PC-3 (cell line): ENCODE measurements at regions of chr6 and their contacts with region 1.

Region 1: DNA sequence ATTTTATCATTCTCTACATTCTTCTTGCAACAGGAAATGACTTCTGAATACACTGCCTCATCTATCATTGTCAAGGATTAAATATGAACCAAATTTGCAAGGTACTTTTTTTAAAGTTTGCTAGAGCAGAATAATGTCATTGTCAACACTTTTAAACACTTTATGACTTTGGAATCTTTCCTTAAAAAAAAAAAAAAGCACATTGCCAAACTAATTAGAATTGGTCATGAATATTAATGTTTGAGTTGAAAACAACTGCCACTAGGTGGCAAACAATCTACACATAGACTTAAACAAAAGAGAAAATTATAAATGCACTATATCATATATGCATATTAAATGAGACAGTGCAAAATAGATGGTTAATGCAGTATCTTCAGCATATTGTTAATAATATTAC is 32.5 kb upstream of the TMEM244 start:
- DNase-seq: peak; percentile 14
- ATAC-seq: no peak
- H3K4me3 ChIP-seq: no peak overlapping the region
- H3K27ac ChIP-seq: no peak overlapping the region
- H3K4me1 ChIP-seq: peaks cover 28% of the 10 kb centered on the region
- H3K27me3 ChIP-seq: no peaks in the 10 kb centered on the region
- CTCF ChIP-seq: peak; percentile 70

Region 2: DNA sequence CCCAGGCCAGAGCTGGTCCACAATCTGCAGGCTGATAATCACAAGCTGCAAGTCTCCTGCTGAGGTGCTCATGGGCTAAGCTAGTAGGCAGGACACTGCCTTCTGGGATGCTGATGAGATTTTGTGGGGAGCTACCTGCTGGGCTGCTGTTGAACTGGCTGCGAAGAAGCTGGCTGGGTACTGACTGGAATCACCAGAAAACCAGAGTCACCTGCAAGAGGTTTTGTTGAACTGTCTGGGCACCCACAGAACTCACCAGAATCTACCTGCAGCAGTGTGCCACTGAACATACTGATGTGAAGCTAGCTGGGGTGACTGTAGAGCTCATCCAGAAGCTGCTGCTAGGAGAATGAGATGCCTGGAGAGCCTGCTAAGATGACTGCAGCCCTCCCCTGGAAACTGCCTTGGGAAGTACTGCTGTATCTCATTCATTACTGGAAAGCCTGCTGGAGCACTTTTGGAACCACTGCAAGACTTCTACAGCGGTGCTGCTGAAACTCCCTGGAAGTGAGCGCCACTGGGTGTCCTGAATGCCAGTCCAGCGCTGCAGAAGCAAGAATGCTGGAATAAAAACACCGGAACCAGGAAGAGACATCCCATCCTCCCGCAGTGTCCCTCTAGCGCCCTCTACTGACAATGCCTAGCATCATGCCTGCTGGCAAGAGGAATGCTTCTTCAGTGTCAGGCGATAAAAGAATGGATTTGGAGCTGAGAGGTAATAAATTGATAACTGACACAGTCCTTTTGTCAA is 118.8 kb before region 1 on chr6:
- CTCF ChIA-PET with region 1: no interaction called
- POLR2A ChIA-PET with region 1: no interaction called
- intact Hi-C with region 1: loop called (anchors 10 kb)
- DNase-seq: peak; percentile 81
- ATAC-seq: peak; percentile 67
- H3K4me3 ChIP-seq: peak overlapping the region; percentile 23; the same call in 1 of the 2 replicates
- H3K27ac ChIP-seq: no peak overlapping the region
- H3K4me1 ChIP-seq: no peaks in the 10 kb centered on the region
- H3K27me3 ChIP-seq: no peaks in the 10 kb centered on the region
- CTCF ChIP-seq: peak; percentile 90

Region 3: DNA sequence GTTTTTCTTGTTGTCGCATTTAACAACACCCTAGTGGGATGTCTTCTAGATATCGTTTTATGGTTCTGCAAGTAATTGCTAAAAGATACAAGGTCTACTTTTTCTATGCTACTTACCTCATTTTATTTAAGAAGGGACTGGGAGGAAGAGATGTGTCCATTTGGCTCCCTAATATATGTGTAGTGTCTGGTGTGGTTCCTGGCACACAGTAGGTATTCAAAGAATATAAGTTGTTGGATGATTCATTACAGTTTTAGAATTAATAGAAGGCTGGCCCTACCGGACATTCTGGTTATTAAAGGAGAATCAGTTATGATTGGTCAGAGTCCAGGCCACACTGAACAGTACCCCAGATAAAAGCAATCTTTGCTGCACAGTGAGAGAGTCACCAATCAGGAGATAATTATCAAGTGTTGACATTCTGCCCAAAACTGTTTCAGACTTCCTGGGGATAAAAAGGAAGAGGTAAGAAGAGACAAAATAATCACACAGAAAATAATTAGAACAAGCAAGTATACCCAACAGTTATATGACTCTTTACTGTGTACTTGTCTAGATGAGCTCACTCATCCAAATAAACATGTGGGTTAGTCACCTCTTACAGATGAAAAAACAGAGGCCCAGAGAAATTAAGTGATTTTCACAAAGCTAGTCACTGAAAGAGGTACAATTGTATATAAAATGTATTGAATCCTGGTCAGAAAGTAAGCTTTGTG is 39.5 kb before region 1 on chr6:
- CTCF ChIA-PET with region 1: no interaction called
- POLR2A ChIA-PET with region 1: no interaction called
- intact Hi-C with region 1: loop called (anchors 2 kb)
- DNase-seq: peak; percentile 64
- ATAC-seq: peak; percentile 86
- H3K4me3 ChIP-seq: no peak overlapping the region
- H3K27ac ChIP-seq: peak overlapping the region; percentile 51
- H3K4me1 ChIP-seq: peaks cover 37% of the 10 kb centered on the region
- H3K27me3 ChIP-seq: no peaks in the 10 kb centered on the region
- CTCF ChIP-seq: no peak

Region 4: GRCh38 chr6:129923530-129924250 is 30.1 kb after region 1 on chr6:
- CTCF ChIA-PET with region 1: no interaction called
- POLR2A ChIA-PET with region 1: no interaction called
- intact Hi-C with region 1: no loop called
- DNase-seq: no peak
- ATAC-seq: no peak
- H3K4me3 ChIP-seq: no peak overlapping the region
- H3K27ac ChIP-seq: no peak overlapping the region
- H3K4me1 ChIP-seq: peaks cover 9% of the 10 kb centered on the region; the same call in 1 of the 2 replicates
- H3K27me3 ChIP-seq: no peaks in the 10 kb centered on the region
- CTCF ChIP-seq: no peak

Region 5: GRCh38 chr6:129936329-129937165 is 42.9 kb after region 1 on chr6:
- CTCF ChIA-PET with region 1: no interaction called
- POLR2A ChIA-PET with region 1: no interaction called
- intact Hi-C with region 1: loop called (anchors 1 kb)
- DNase-seq: peak; percentile 77
- ATAC-seq: peak; percentile 49
- H3K4me3 ChIP-seq: no peak overlapping the region; the same call in 1 of the 2 replicates
- H3K27ac ChIP-seq: no peak overlapping the region
- H3K4me1 ChIP-seq: peaks cover 25% of the 10 kb centered on the region
- H3K27me3 ChIP-seq: no peaks in the 10 kb centered on the region
- CTCF ChIP-seq: peak; percentile 71

Region 6: GRCh38 chr6:129981598-129981997 is 88.0 kb after region 1 on chr6:
- CTCF ChIA-PET with region 1: no interaction called
- POLR2A ChIA-PET with region 1: no interaction called
- intact Hi-C with region 1: loop called (anchors 1 kb)
- DNase-seq: peak; percentile 22
- ATAC-seq: no peak
- H3K4me3 ChIP-seq: no peak overlapping the region
- H3K27ac ChIP-seq: no peak overlapping the region
- H3K4me1 ChIP-seq: no peaks in the 10 kb centered on the region
- H3K27me3 ChIP-seq: no peaks in the 10 kb centered on the region
- CTCF ChIP-seq: peak; percentile 59

Region 7: GRCh38 chr6:130020907-130021629 is 127.4 kb after region 1 on chr6:
- CTCF ChIA-PET with region 1: interaction called, 3 read pairs
- POLR2A ChIA-PET with region 1: no interaction called
- intact Hi-C with region 1: loop called (anchors 1 kb)
- DNase-seq: peak; percentile 85
- ATAC-seq: peak; percentile 54
- H3K4me3 ChIP-seq: peak overlapping the region; percentile 75
- H3K27ac ChIP-seq: no peak overlapping the region
- H3K4me1 ChIP-seq: no peaks in the 10 kb centered on the region; the same call in 1 of the 2 replicates
- H3K27me3 ChIP-seq: no peaks in the 10 kb centered on the region
- CTCF ChIP-seq: peak; percentile 77